Activated CD4-positive, alpha-beta memory T cell treated with anti-CD3 and anti-CD28 coated beads for 36 hours (primary cell): ENCODE measurements at regions of chr10 and their contacts with region 1.

Region 1: DNA sequence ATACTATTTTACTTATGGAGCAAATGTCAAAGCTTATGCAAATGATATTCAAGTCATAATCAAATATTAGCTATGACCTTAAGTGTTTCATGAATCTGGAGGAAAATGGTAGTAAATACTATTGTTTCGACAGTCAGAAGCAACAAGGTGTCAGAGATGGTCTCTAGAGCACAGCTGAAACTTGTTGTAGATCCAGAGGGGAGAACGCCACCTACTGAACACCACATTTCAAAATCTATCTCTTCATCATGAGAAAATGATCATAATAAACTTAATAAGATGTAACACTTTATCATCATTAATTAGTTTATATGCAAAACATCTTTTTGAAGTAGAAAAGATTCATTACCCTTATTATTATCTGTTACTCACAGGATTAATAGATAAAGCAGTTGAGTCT is 418.7 kb downstream of the GATA3 start:
- DNase-seq: peak; percentile 13
- H3K4me3 Mint-ChIP-seq: no peak overlapping the region
- H3K27ac Mint-ChIP-seq: no peak overlapping the region
- H3K4me1 Mint-ChIP-seq: peaks cover 4% of the 10 kb centered on the region
- H3K27me3 Mint-ChIP-seq: peaks cover 13% of the 10 kb centered on the region

Region 2: DNA sequence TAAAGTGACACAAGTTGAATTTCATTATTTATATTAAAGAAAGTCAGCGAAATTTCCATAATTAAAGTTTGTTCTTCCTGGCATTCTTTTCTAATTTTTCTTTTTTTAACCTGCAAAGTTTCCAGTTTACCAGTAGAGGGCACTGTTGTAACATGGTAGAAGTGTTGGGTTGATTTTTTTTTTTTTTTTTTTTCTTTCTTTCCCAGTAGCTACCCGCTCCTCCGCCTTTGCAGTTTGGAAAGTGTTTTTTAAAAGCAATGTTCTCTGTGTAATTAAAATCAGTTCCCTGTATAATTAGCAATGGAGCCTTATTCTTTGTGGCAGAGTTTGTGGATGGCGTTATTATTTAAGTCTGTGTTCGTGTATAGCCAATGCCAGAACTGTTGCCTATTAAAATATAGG is 601.2 kb before region 1 on chr10:
- CTCF ChIA-PET with region 1: no interaction called
- POLR2A ChIA-PET with region 1: no interaction called
- intact Hi-C with region 1: loop called (anchors 1 kb)
- DNase-seq: no peak
- H3K4me3 Mint-ChIP-seq: peak overlapping the region; percentile 57
- H3K27ac Mint-ChIP-seq: no peak overlapping the region
- H3K4me1 Mint-ChIP-seq: peaks cover 20% of the 10 kb centered on the region
- H3K27me3 Mint-ChIP-seq: no peaks in the 10 kb centered on the region